Natural killer cell (primary cell): ENCODE measurements at regions of chr16 and their contacts with region 1.

Region 1: DNA sequence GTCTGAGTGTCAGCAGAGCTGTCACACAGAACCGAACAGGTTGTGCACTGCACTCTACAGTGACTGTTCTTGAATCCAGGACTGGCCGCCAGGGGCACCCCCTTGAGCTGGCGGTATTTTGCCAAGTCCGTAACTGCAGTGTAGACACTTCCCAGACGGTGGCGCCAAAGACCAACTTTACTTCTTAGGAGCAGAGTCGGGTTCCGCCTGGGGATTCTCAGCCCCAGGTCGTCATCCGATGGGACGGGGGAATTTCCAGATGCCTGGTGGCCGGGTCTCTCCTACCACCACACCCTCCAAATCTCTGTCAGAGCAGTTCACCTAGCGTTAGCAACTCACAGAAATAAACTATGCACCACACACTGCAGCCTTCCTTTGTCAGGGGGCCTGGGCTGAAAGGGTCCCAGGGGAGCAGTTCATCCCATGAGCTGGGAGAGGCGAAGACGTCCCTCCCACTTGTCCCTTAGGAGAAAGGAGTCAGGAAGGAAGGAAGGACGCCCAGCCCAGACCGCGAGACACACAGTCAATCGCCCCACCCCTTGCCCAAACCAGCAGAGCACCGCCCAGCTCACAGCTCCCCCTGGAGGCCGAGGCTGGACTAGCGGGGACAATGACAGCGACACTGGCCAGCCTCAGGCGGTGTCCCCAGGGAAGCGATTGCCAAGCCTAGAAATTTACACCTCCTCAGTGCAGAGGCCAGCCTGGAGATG is 7.4 kb upstream of the RIPOR1 start:
- DNase-seq: peak; percentile 97 to 99
- ATAC-seq: peak; percentile 90 to 97 (median 91)
- H3K4me3 ChIP-seq: peak overlapping the region; percentile 50
- H3K4me3 Mint-ChIP-seq: peak overlapping the region; percentile 93
- H3K27ac ChIP-seq: peak overlapping the region; percentile 95
- H3K27ac Mint-ChIP-seq: peak overlapping the region; percentile 99
- H3K4me1 ChIP-seq: peaks cover 34% of the 10 kb centered on the region
- H3K4me1 Mint-ChIP-seq: peaks cover 21 to 31% of the 10 kb centered on the region in 2 donors
- H3K27me3 ChIP-seq: no peaks in the 10 kb centered on the region
- H3K27me3 Mint-ChIP-seq: no peaks in the 10 kb centered on the region
- CTCF ChIP-seq: peak; percentile 98

Region 2: GRCh38 chr16:67447508-67448076 is 73.7 kb before region 1 on chr16:
- intact Hi-C with region 1: no loop called
- DNase-seq: peak in 1 of 2 donors; percentile 65
- ATAC-seq: peak; percentile 48 to 67 (median 57)
- H3K4me3 ChIP-seq: no peak overlapping the region
- H3K4me3 Mint-ChIP-seq: no peak overlapping the region
- H3K27ac ChIP-seq: no peak overlapping the region
- H3K27ac Mint-ChIP-seq: no peak overlapping the region
- H3K4me1 ChIP-seq: no peaks in the 10 kb centered on the region
- H3K4me1 Mint-ChIP-seq: peaks cover 24 to 56% of the 10 kb centered on the region in 2 donors
- H3K27me3 ChIP-seq: no peaks in the 10 kb centered on the region
- H3K27me3 Mint-ChIP-seq: no peaks in the 10 kb centered on the region
- CTCF ChIP-seq: peak; percentile 29

Region 3: DNA sequence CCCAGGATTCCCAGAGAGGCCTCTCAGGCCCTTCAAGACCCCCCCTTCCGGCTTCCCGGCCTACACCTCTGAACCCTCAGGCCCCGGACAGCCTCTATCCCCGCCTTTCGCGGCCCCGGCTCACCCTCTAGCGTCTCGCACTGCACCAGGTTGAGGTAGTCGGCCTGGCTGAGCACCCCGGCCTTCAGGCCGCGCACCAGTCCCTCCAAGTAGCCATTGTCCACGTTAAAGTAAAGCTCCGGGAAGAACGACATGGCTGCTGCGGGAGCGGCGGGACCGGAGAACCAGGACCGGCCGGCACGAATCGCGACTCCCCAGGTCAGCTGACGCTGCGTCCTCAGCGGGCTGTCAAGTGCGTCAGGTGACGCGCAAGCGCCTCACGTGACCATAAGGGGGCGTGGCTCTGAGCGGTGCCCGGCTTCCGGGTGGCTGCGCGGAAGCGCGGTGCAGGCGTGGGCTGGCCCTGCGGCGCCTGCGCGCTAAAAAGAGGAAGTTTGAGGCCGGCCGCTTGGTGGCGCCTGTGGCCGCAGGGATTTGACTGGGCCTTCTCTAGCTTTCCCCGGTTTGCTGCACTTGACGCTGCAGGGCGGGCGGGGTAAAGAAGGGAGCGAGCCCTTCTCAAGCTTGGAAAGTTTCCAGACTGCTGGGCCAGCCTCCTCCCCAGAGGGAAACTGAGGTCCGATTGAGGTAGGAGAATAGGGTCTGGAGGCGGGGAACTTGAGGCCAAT is 40.3 kb before region 1 on chr16 and contains the start of gene ATP6V0D1:
- intact Hi-C with region 1: loop called (anchors 5 kb)
- DNase-seq: peak; percentile 100
- ATAC-seq: peak; percentile 81 to 97 (median 91)
- H3K4me3 ChIP-seq: peak within 1 kb of the TSS; percentile 87
- H3K4me3 Mint-ChIP-seq: peak within 1 kb of the TSS; percentile 100
- H3K27ac ChIP-seq: peak within 1 kb of the TSS; percentile 96
- H3K27ac Mint-ChIP-seq: peak within 1 kb of the TSS; percentile 100
- H3K4me1 ChIP-seq: peaks cover 42% of the 10 kb centered on the region
- H3K4me1 Mint-ChIP-seq: peaks cover 37 to 55% of the 10 kb centered on the region in 2 donors
- H3K27me3 ChIP-seq: no peaks in the 10 kb centered on the region
- H3K27me3 Mint-ChIP-seq: no peaks in the 10 kb centered on the region
- CTCF ChIP-seq: peak; percentile 80
- total RNA-seq, gene ATP6V0D1: 76.0 to 84.9 (median 83.3) TPM

Region 4: GRCh38 chr16:67546761-67547422 is 25.6 kb after region 1 on chr16:
- intact Hi-C with region 1: loop called (anchors 2 kb)
- DNase-seq: peak; percentile 71 to 89
- ATAC-seq: peak; percentile 27 to 49 (median 46)
- H3K4me3 ChIP-seq: no peak overlapping the region
- H3K4me3 Mint-ChIP-seq: no peak overlapping the region
- H3K27ac ChIP-seq: peak overlapping the region; percentile 71
- H3K27ac Mint-ChIP-seq: peak overlapping the region; percentile 47 to 53
- H3K4me1 ChIP-seq: peaks cover 46% of the 10 kb centered on the region
- H3K4me1 Mint-ChIP-seq: peaks cover 8 to 41% of the 10 kb centered on the region in 2 donors
- H3K27me3 ChIP-seq: no peaks in the 10 kb centered on the region
- H3K27me3 Mint-ChIP-seq: no peaks in the 10 kb centered on the region
- CTCF ChIP-seq: peak; percentile 98

Region 5: GRCh38 chr16:67667817-67668494 is 146.7 kb after region 1 on chr16:
- intact Hi-C with region 1: loop called (anchors 1 kb)
- DNase-seq: peak; percentile 72 to 91
- ATAC-seq: peak; percentile 87 to 91 (median 87)
- H3K4me3 ChIP-seq: no peak overlapping the region
- H3K4me3 Mint-ChIP-seq: peak overlapping the region; percentile 35
- H3K27ac ChIP-seq: peak overlapping the region; percentile 50
- H3K27ac Mint-ChIP-seq: peak overlapping the region; percentile 16 to 90
- H3K4me1 ChIP-seq: peaks cover 32% of the 10 kb centered on the region
- H3K4me1 Mint-ChIP-seq: peaks cover 5 to 27% of the 10 kb centered on the region in 2 donors
- H3K27me3 ChIP-seq: no peaks in the 10 kb centered on the region
- H3K27me3 Mint-ChIP-seq: no peaks in the 10 kb centered on the region
- CTCF ChIP-seq: peak; percentile 75

Region 6: DNA sequence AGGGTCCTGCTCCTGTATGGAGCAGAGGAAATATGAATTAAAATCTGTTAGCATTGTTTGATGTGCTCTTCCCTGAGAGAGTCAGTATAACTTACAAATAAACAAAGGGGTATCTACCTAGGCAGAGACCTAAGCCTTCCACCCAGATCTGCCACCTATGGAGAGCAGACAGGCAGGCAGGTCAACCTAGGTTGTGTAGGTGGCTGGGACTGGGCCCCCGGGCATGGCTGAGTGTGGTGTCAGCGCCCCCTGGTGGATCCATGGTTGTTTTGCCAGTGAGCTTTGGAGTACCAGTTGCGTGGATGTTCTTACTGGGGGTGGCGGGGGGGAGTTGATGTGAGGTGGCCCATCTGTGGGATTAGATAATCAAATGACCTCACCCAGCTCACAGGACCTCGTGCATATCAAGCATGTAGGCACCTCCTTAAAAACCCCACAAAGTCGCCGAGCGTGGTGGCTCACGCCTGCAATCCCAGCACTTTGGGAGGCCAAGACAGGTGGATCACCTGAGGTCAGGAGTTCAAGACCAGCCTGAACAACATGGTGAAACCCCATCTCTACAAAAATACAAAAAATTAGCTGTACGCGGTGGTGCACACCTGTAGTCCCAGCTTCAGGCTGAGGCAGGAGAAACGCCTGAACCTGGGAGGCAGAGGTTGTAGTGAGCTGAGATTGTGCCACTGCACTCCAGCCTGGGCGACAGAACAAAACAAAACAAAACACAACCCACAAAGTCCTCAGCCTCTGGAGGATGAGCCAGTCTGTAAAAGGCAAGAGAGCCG is 519.4 kb after region 1 on chr16:
- intact Hi-C with region 1: loop called (anchors 1 kb)
- DNase-seq: peak; percentile 89 to 93
- ATAC-seq: peak; percentile 98 to 100 (median 99)
- H3K4me3 ChIP-seq: no peak overlapping the region
- H3K4me3 Mint-ChIP-seq: no peak overlapping the region
- H3K27ac ChIP-seq: no peak overlapping the region
- H3K27ac Mint-ChIP-seq: peak overlapping the region; percentile 72 to 79
- H3K4me1 ChIP-seq: peaks cover 35% of the 10 kb centered on the region
- H3K4me1 Mint-ChIP-seq: peaks cover 16 to 19% of the 10 kb centered on the region in 2 donors
- H3K27me3 ChIP-seq: no peaks in the 10 kb centered on the region
- H3K27me3 Mint-ChIP-seq: no peaks in the 10 kb centered on the region
- CTCF ChIP-seq: peak; percentile 83